Vagina (tissue), 2 donors: ENCODE measurements at regions of chr2 and their contacts with region 1.

Region 1: GRCh38 chr2:209661286-209661894 is 110.2 kb upstream of the UNC80 start:
- DNase-seq: no peak
- H3K4me3 ChIP-seq: no peak overlapping the region
- H3K27ac ChIP-seq: no peak overlapping the region
- H3K4me1 ChIP-seq: no peaks in the 10 kb centered on the region
- H3K27me3 ChIP-seq: no peaks in the 10 kb centered on the region
- CTCF ChIP-seq: no peak
- POLR2A ChIP-seq: no peak

Region 2: GRCh38 chr2:209614690-209615369 is 46.6 kb before region 1 on chr2:
- intact Hi-C with region 1: loop called (anchors 1 kb)
- DNase-seq: no peak
- H3K4me3 ChIP-seq: no peak overlapping the region
- H3K27ac ChIP-seq: no peak overlapping the region
- H3K4me1 ChIP-seq: no peaks in the 10 kb centered on the region
- H3K27me3 ChIP-seq: no peaks in the 10 kb centered on the region
- CTCF ChIP-seq: no peak
- POLR2A ChIP-seq: no peak

Region 3: DNA sequence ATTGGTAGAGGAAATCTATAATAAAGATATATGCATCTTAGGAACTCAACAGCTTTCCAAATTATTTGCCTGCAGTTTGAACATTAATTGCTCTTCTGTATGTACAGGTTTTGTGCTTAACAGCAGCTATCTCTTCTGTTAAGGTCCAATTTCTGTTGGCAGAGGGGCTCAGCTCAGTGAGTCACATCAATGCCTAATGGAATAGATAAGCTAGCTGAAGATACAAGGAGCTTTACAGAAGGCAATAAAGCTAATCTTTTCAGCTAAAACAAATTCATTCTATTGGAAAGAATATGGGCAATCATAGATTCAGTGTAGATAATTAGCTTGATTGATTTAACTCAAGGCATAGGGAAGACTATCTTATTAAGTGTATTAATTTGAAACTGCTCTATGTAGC is 51.8 kb after region 1 on chr2:
- intact Hi-C with region 1: no loop called
- DNase-seq: no peak
- H3K4me3 ChIP-seq: no peak overlapping the region
- H3K27ac ChIP-seq: no peak overlapping the region
- H3K4me1 ChIP-seq: no peaks in the 10 kb centered on the region
- H3K27me3 ChIP-seq: no peaks in the 10 kb centered on the region
- CTCF ChIP-seq: no peak
- POLR2A ChIP-seq: no peak

Region 4: DNA sequence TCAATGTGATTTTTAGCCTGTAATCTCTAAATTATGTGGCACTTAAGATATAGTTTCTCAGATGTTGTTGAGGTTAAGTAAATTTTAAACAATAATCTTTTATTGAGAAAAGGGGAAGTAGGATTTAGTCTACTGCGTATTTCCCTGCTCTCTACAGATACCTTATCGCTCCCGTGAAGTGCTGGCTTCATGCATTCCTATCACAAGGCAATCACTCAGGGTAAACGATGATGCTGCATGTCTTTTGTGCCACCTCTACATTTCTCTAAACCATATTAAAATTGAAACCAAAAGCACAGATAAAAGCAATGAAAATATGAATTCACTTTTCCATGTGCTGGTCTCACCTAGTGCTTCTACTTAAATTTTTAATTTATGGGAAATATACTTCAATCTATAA is 326.6 kb after region 1 on chr2:
- intact Hi-C with region 1: no loop called
- DNase-seq: no peak
- H3K4me3 ChIP-seq: no peak overlapping the region
- H3K27ac ChIP-seq: no peak overlapping the region
- H3K4me1 ChIP-seq: no peaks in the 10 kb centered on the region
- H3K27me3 ChIP-seq: no peaks in the 10 kb centered on the region
- CTCF ChIP-seq: no peak
- POLR2A ChIP-seq: no peak